Breast epithelium (tissue), 4 donors: ENCODE measurements at regions of chrX and their contacts with region 1.

Region 1: GRCh38 chrX:703866-704265 is 73.3 kb downstream of the SHOX start:
- DNase-seq: no peak
- H3K4me3 ChIP-seq: no peak overlapping the region
- H3K27ac ChIP-seq: no peak overlapping the region
- H3K4me1 ChIP-seq: no peaks in the 10 kb centered on the region
- H3K27me3 ChIP-seq: peaks cover 0 to 6% of the 10 kb centered on the region in 2 donors
- CTCF ChIP-seq: no peak
- POLR2A ChIP-seq: no peak

Region 2: GRCh38 chrX:644304-645281 is 59.3 kb before region 1 on chrX:
- intact Hi-C with region 1: no loop called
- DNase-seq: no peak
- H3K4me3 ChIP-seq: no peak overlapping the region
- H3K27ac ChIP-seq: no peak overlapping the region
- H3K4me1 ChIP-seq: no peaks in the 10 kb centered on the region
- H3K27me3 ChIP-seq: peaks cover 0 to 61% of the 10 kb centered on the region in 2 donors
- CTCF ChIP-seq: no peak
- POLR2A ChIP-seq: no peak

Region 3: DNA sequence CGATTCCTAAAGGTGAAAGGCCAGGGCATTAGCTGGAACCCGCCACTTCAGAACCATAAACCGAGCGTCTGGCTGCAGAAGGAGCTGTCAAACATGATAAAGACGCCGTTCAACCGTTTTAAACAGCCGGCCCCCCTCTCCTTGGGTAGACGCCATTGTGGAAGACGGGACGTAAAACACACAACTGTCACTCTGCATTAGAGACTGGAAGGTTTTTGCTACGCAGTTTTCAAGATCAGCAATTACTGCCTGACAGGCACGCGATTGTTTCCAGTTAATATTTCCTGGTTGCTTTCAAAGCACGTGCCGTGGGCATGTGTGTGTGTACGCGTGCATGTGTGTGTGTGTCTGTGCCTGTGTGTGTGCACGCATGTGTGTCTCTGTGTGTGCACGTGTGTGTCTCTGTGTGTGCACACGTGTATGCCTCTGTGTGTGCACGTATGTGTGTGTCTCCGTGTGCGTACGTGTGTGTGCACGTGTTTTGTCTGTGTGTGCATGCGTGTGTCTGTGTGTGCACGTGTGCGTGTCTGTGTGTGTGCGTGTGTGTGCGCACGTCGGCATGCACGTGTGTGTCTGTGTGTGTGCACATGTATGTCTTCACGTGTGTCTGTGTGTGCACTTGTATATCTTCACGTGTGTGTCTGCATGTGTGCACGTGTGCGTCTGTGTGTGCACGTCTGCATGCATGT is 24.4 kb before region 1 on chrX:
- intact Hi-C with region 1: no loop called
- DNase-seq: no peak
- H3K4me3 ChIP-seq: no peak overlapping the region
- H3K27ac ChIP-seq: no peak overlapping the region
- H3K4me1 ChIP-seq: no peaks in the 10 kb centered on the region
- H3K27me3 ChIP-seq: peaks cover 0 to 15% of the 10 kb centered on the region in 2 donors
- CTCF ChIP-seq: no peak
- POLR2A ChIP-seq: no peak

Region 4: DNA sequence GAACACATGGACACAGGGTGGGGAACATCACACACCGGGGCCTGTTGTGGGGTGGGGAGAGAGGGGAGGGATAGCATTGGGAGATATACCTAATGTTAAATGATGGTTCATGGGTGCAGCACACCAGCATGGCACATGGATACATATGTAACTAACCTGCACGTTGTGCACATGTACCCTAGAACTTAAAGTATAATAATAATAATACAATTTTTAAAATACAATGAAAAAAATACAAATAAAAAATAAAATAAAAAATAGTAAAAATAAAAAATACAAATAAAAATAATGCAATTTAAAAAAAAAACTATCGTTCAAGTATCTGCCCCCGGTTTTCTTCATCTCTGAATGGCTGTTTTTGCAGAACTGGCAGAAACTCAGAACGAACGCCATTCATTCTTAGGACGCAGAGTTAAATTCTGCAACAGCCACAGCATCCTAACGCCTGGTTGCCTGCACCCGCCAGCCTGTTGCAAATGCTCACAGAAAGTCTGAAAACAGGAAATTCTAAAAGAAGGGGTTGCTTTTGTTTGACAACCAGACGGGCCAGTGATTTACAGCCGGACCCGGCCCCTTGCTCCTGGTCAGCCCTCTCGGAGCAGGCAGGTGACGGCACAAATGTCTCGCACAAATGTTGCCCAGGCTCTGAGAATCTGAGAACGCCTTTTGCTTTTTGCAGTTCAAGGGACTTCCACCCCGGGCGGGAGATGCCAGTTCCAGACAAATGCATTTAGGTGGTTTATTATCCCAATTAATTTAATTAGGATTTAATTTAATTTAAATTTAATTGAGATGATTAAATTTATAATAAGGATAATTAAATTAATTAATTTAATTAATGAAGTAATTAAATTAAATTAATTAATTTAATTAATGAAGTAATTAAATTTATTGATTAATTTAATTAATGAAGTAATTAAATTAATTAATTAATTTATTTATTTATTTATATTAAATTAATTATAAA is 460.7 kb after region 1 on chrX:
- intact Hi-C with region 1: loop called (anchors 5 kb)
- DNase-seq: peak in 1 of 2 donors; percentile 48
- H3K4me3 ChIP-seq: no peak overlapping the region
- H3K27ac ChIP-seq: no peak overlapping the region
- H3K4me1 ChIP-seq: no peaks in the 10 kb centered on the region
- H3K27me3 ChIP-seq: no peaks in the 10 kb centered on the region
- CTCF ChIP-seq: no peak
- POLR2A ChIP-seq: no peak